K562 (cell line): ENCODE measurements at regions of chr17 and their contacts with region 1.

Region 1: DNA sequence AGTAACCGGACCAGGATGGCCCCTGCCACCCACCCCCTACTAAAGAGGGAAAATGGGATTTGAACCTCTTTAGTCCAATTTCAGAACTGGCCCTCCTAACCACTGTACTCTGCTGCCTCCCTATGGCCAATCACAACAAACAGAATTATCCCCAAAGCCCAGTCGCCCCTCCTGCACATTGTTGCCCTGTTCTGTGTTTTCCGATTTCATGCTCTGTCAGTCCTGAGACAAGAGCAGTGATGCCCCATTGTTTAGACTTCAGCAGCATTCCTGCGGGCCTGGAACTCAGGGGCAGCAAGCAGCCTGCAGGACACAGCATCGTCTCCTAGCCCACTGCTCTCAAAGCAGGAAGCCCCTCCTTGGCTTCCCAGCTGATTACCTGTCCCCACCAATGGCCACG is 20.5 kb upstream of the KLHL11 start:
- DNase-seq: peak in 3 of 4 experiments; percentile 30 to 38 (median 36)
- ATAC-seq: peak; percentile 61
- H3K4me3 ChIP-seq: no peak overlapping the region
- H3K27ac ChIP-seq: no peak overlapping the region
- H3K4me1 ChIP-seq: no peaks in the 10 kb centered on the region
- H3K27me3 ChIP-seq: no peaks in the 10 kb centered on the region
- CTCF ChIP-seq: peak; percentile 30 to 61 (median 46); a peak in 5 of 6 replicates
- EP300 ChIP-seq: no peak
- POLR2A ChIP-seq: no peak
- RAD21 ChIP-seq: peak; percentile 28 to 58

Region 2: DNA sequence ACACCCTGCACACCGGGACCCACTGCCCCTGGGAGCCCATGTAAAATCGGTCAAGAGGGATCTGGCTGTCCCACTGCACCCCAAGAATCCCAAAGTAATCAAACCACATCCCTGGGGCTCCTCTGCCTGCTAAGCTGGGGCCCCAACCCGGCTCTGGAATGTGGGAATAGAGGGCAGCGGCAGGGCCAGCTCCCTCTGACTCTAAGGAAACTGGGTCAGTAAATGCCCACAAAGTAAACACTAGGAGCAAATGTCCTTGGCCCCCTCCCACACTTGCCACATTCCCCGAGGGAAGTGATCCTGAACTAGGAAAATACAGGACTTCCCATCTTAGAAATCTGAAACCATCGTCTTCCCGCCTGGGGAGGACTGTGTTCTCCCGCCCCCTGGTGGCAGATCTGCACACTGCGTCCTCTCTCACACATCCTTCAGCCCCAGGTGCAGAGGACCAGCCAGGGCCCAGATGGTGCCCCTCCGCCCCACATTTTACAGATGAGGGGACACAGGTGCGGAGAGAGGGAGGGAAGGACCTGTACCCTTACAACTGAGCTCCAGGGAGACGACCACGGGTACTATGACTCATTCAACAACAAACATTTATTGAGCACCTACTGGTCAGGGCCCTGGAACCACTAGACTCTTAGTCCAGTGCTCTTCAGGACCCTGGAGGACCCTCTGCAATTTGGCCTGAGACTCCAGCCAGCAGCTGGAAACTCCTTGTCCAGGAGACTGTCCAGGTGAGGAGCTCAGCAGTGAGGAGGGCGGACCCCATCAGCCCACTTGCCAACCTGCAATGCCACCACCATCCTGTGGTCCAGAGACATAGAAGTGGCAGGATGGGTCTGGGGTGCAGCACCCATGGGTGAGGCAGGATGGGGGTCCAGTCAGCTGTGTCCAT is 84.1 kb before region 1 on chr17:
- CTCF ChIA-PET with region 1: no interaction called
- POLR2A ChIA-PET with region 1: no interaction called
- in situ Hi-C with region 1: no loop called
- intact Hi-C with region 1: loop called (anchors 10 kb)
- DNase-seq: peak; percentile 79 to 86 (median 80)
- ATAC-seq: peak; percentile 87
- H3K4me3 ChIP-seq: no peak overlapping the region
- H3K27ac ChIP-seq: no peak overlapping the region
- H3K4me1 ChIP-seq: peaks cover 9 to 29% of the 10 kb centered on the region in 2 experiments
- H3K27me3 ChIP-seq: no peaks in the 10 kb centered on the region
- CTCF ChIP-seq: peak; percentile 92 to 97 (median 93)
- EP300 ChIP-seq: no peak
- POLR2A ChIP-seq: no peak
- RAD21 ChIP-seq: peak; percentile 92 to 99

Region 3: GRCh38 chr17:41836550-41837196 is 49.1 kb before region 1 on chr17:
- CTCF ChIA-PET with region 1: no interaction called
- POLR2A ChIA-PET with region 1: no interaction called
- in situ Hi-C with region 1: no loop called
- intact Hi-C with region 1: no loop called
- DNase-seq: no peak
- ATAC-seq: peak; percentile 3; the same call in 1 of the 3 replicates
- H3K4me3 ChIP-seq: peak overlapping the region; percentile 77
- H3K27ac ChIP-seq: peak overlapping the region; percentile 3; the same call in 1 of the 3 replicates
- H3K4me1 ChIP-seq: peaks cover 7 to 15% of the 10 kb centered on the region in 2 experiments; a peak in 4 of 5 replicates
- H3K27me3 ChIP-seq: no peaks in the 10 kb centered on the region
- CTCF ChIP-seq: no peak
- EP300 ChIP-seq: no peak
- POLR2A ChIP-seq: no peak
- RAD21 ChIP-seq: no peak

Region 4: DNA sequence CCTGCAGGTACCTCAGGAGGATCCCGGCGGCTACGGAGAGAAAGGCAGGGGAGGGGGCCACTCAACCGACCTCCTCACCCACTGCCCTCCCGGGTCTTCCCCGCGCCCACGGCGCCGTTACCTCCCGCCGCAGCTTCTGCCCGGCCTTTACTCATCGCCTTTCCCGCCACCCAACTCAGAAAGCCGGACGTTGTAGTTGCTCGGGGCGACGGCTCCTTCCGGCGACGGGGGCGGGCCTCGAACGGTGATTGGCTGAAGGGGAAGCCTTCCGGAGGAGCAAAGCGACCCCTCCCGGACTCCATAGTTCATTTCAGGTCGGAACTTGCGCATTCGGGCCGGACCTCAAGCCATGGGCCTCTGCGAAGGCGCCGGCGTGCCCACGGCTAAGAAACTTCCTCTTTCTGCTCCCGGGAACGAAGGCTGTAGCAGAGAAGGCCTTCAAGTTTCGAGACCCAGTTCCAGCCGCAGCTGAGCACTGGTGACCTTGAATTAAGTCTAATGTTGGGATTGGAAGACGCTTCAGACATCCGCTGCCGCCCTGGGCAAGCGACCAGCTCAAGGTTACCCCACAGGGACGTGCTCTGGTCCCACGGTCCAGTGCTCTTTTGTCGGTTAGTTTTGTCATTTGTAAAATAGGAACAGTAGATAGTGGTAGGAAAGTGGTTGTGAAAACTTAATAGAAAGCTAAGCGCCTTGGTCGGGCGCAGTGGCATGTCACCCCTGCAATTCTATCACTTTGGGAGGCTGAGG is 692.0 kb after region 1 on chr17 and contains the start of gene PSMC3IP:
- CTCF ChIA-PET with region 1: no interaction called
- POLR2A ChIA-PET with region 1: no interaction called
- in situ Hi-C with region 1: no loop called
- intact Hi-C with region 1: no loop called
- DNase-seq: peak; percentile 97 to 98 (median 98)
- ATAC-seq: peak; percentile 91
- H3K4me3 ChIP-seq: peak within 1 kb of the TSS; percentile 70
- H3K27ac ChIP-seq: peak within 1 kb of the TSS; percentile 94
- H3K4me1 ChIP-seq: peaks cover 23 to 34% of the 10 kb centered on the region in 2 experiments
- H3K27me3 ChIP-seq: no peaks in the 10 kb centered on the region
- CTCF ChIP-seq: peak; percentile 59 to 68 (median 62)
- EP300 ChIP-seq: peak; percentile 38; the same call in 1 of the 2 replicates
- POLR2A ChIP-seq: peak; percentile 92
- RAD21 ChIP-seq: no peak
- polyA plus RNA-seq, gene PSMC3IP: 13.8 to 16.0 TPM